CD4-positive, alpha-beta memory T cell (primary cell): ENCODE measurements at regions of chr22 and their contacts with region 1.

Region 1: GRCh38 chr22:31970490-31971444 is 26.4 kb downstream of the YWHAH start:
- DNase-seq: peak; percentile 82 to 93 (median 86)
- H3K4me3 ChIP-seq: peak overlapping the region; percentile 39 to 61
- H3K4me3 Mint-ChIP-seq: peak overlapping the region; percentile 81 to 95 (median 86)
- H3K27ac ChIP-seq: peak overlapping the region; percentile 10
- H3K27ac Mint-ChIP-seq: peak overlapping the region; percentile 73 to 94 (median 85)
- H3K4me1 ChIP-seq: peaks cover 19% of the 10 kb centered on the region
- H3K4me1 Mint-ChIP-seq: peaks cover 5 to 19% (median 13%) of the 10 kb centered on the region in 4 donors
- H3K27me3 ChIP-seq: no peaks in the 10 kb centered on the region
- H3K27me3 Mint-ChIP-seq: no peaks in the 10 kb centered on the region

Region 2: DNA sequence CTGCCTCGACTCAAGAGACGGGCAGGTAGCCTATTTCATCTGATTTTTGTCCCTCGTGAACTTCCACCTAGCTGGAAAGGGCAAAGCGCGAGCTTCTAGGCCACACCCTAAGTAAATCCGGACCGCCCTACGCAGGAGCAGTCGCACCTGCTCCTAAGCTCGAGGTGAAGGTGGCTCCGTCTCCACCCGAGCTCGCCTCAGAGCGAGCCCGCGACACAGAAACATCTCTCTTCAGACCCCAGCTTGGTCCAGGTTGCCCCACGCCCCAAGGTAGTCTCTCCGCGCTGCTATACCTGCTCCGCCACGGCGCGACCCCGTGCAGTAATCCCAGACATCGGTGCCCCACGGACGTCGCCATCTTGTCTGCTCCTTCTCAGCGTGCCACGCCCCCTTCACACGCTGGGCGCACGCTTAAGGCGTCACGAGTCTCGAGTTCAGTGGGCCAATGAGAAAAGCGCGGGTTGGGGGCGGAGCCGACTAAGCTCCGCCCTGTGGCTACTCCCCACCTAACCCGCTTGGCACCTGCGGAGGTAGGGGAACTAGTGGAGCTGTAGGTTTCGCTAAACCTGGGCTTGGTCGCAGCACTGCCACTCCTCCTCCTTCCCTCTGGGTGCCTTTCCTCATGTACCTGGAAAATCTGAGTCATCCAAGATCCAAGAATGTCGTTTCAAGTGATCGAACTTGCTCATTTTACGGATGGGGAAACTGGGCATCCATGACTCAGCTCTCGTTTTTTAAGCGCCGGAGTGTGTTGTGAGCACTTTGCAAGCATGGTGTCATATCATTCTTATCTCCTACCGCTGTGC is 308.7 kb before region 1 on chr22 and contains the start of gene PISD:
- CTCF ChIA-PET with region 1: interaction called, 46 read pairs
- POLR2A ChIA-PET with region 1: interaction called, 8 read pairs
- intact Hi-C with region 1: loop called (anchors 1 kb)
- DNase-seq: peak; percentile 96 to 97 (median 97)
- H3K4me3 ChIP-seq: peak within 1 kb of the TSS; percentile 78 to 96
- H3K4me3 Mint-ChIP-seq: peak within 1 kb of the TSS; percentile 97 to 100 (median 100)
- H3K27ac ChIP-seq: peak within 1 kb of the TSS; percentile 73
- H3K27ac Mint-ChIP-seq: peak within 1 kb of the TSS; percentile 95 to 100 (median 98)
- H3K4me1 ChIP-seq: peaks cover 21% of the 10 kb centered on the region
- H3K4me1 Mint-ChIP-seq: peaks cover 26 to 46% (median 33%) of the 10 kb centered on the region in 4 donors
- H3K27me3 ChIP-seq: no peaks in the 10 kb centered on the region
- H3K27me3 Mint-ChIP-seq: peaks cover 0 to 2% of the 10 kb centered on the region in 2 donors
- total RNA-seq, gene PISD: 34.3 to 35.4 TPM

Region 3: GRCh38 chr22:31749636-31750364 is 221.0 kb before region 1 on chr22 and contains the start of gene PRR14L:
- CTCF ChIA-PET with region 1: interaction called, 7 read pairs
- POLR2A ChIA-PET with region 1: no interaction called
- intact Hi-C with region 1: loop called (anchors 1 kb)
- DNase-seq: peak; percentile 96 to 99 (median 96)
- H3K4me3 ChIP-seq: peak within 1 kb of the TSS; percentile 24 to 87
- H3K4me3 Mint-ChIP-seq: peak within 1 kb of the TSS; percentile 92 to 100 (median 96)
- H3K27ac ChIP-seq: peak within 1 kb of the TSS; percentile 85
- H3K27ac Mint-ChIP-seq: peak within 1 kb of the TSS; percentile 93 to 97 (median 96)
- H3K4me1 ChIP-seq: peaks cover 48% of the 10 kb centered on the region
- H3K4me1 Mint-ChIP-seq: peaks cover 33 to 70% (median 50%) of the 10 kb centered on the region in 4 donors
- H3K27me3 ChIP-seq: no peaks in the 10 kb centered on the region
- H3K27me3 Mint-ChIP-seq: no peaks in the 10 kb centered on the region
- total RNA-seq, gene PRR14L: 70.7 to 72.6 TPM

Region 4: DNA sequence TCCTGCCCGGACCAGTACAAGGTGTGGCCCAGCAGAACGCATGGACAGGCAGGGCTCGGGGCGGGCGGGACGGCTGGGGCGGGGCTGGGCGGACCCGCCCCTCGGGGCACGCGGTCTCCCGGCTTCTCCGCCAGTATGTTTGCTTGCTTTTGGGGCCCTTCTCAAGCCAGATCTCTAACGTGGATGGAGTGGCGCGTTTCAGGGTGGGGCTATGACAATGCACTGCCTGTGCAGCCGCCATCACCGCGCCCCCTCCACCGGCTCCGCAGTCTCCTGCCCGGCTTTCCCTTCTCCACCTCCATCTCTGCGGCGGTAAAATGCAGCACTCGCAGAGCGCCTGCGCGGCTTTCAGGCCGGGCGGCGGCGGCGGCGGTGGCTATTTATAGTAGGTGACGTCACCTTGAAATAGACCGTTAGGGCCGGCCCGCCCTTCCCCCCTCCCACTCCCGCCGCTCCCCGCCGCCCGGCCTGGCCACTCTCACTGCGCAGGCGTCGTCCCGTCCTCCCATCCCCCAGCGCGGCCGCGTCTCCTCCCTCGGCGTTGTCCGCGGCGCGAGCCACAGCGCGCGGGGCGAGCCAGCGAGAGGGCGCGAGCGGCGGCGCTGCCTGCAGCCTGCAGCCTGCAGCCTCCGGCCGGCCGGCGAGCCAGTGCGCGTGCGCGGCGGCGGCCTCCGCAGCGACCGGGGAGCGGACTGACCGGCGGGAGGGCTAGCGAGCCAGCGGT is 26.6 kb before region 1 on chr22 and contains the start of gene YWHAH:
- CTCF ChIA-PET with region 1: interaction called, 20 read pairs
- POLR2A ChIA-PET with region 1: interaction called, 6 read pairs
- intact Hi-C with region 1: loop called (anchors 1 kb)
- DNase-seq: peak; percentile 86 to 89 (median 86)
- H3K4me3 ChIP-seq: peak within 1 kb of the TSS; percentile 55 to 67
- H3K4me3 Mint-ChIP-seq: peak within 1 kb of the TSS; percentile 91 to 97 (median 94)
- H3K27ac ChIP-seq: peak within 1 kb of the TSS; percentile 77
- H3K27ac Mint-ChIP-seq: peak within 1 kb of the TSS in 6 of 7 donors; percentile 94 to 98 (median 96)
- H3K4me1 ChIP-seq: peaks cover 33% of the 10 kb centered on the region
- H3K4me1 Mint-ChIP-seq: peaks cover 10 to 25% (median 17%) of the 10 kb centered on the region in 4 donors
- H3K27me3 ChIP-seq: no peaks in the 10 kb centered on the region
- H3K27me3 Mint-ChIP-seq: no peaks in the 10 kb centered on the region
- total RNA-seq, gene YWHAH: 48.0 to 57.0 TPM

Region 5: GRCh38 chr22:31958625-31959239 is 12.0 kb before region 1 on chr22:
- CTCF ChIA-PET with region 1: interaction called, 95 read pairs
- POLR2A ChIA-PET with region 1: interaction called, 16 read pairs
- intact Hi-C with region 1: no loop called
- DNase-seq: peak; percentile 40 to 72 (median 69)
- H3K4me3 ChIP-seq: no peak overlapping the region
- H3K4me3 Mint-ChIP-seq: peak overlapping the region; percentile 73 to 90 (median 79)
- H3K27ac ChIP-seq: peak overlapping the region; percentile 61
- H3K27ac Mint-ChIP-seq: peak overlapping the region; percentile 95 to 99 (median 97)
- H3K4me1 ChIP-seq: peaks cover 64% of the 10 kb centered on the region
- H3K4me1 Mint-ChIP-seq: peaks cover 44 to 71% (median 55%) of the 10 kb centered on the region in 4 donors
- H3K27me3 ChIP-seq: no peaks in the 10 kb centered on the region
- H3K27me3 Mint-ChIP-seq: no peaks in the 10 kb centered on the region

Region 6: GRCh38 chr22:32097018-32097417 is 126.3 kb after region 1 on chr22:
- CTCF ChIA-PET with region 1: no interaction called
- POLR2A ChIA-PET with region 1: no interaction called
- intact Hi-C with region 1: no loop called
- DNase-seq: no peak
- H3K4me3 ChIP-seq: no peak overlapping the region
- H3K4me3 Mint-ChIP-seq: no peak overlapping the region
- H3K27ac ChIP-seq: no peak overlapping the region
- H3K27ac Mint-ChIP-seq: no peak overlapping the region
- H3K4me1 ChIP-seq: no peaks in the 10 kb centered on the region
- H3K4me1 Mint-ChIP-seq: peaks cover 11 to 16% (median 14%) of the 10 kb centered on the region in 4 donors
- H3K27me3 ChIP-seq: no peaks in the 10 kb centered on the region
- H3K27me3 Mint-ChIP-seq: peaks cover 3 to 9% of the 10 kb centered on the region in 2 donors

Region 7: GRCh38 chr22:32389685-32390084 is 418.9 kb after region 1 on chr22:
- CTCF ChIA-PET with region 1: no interaction called
- POLR2A ChIA-PET with region 1: no interaction called
- intact Hi-C with region 1: loop called (anchors 10 kb)
- DNase-seq: no peak
- H3K4me3 ChIP-seq: no peak overlapping the region
- H3K4me3 Mint-ChIP-seq: no peak overlapping the region
- H3K27ac ChIP-seq: no peak overlapping the region
- H3K27ac Mint-ChIP-seq: peak overlapping the region in 3 of 7 donors; percentile 32 to 54 (median 40)
- H3K4me1 ChIP-seq: no peaks in the 10 kb centered on the region
- H3K4me1 Mint-ChIP-seq: peaks cover 0 to 1% (median 0%) of the 10 kb centered on the region in 4 donors
- H3K27me3 ChIP-seq: no peaks in the 10 kb centered on the region
- H3K27me3 Mint-ChIP-seq: no peaks in the 10 kb centered on the region

Region 8: DNA sequence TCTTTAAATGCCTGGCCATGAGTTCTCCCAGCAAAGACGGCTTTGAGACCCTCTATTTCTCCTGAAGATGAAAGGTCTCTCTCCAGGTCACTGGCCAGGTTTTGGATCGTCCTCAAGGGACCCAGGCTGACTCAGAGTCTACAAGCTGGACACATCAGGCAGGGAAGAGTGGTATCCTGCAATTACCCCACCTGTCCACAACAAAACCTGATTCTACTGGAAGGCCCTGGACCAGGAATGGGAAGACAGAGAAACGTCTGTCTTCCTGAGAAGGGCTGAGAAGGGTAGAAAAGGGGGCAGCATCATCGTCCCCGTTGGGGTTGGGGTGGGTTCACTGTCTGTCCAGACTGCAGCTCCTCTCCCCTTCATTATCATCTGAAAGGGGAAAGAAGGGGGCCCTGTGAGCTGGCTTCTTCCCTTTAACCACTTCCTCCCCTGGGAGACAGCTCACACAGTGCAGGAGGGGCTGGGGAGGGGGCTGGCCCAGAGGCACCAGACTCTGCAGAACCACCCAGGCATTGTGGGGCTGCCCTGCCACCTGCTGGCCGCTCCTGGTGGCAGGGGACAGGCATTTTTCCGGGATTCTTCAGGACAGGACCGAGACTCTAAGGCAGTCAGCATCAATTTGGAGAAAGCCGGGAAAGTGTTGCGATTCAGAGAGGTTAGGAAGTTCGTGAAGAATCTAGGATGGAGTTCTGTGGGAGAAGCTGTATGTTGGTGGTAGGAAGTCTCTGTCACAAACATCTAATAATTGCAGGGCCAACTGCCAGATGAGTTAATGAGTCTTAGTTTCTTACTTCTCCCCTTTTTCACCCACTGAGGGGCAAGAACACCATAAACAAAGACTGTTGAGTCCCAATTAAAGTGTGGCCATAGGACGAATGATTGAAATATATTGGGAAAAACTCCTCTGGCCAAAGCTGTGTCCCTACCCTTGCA is 1029.8 kb after region 1 on chr22:
- CTCF ChIA-PET with region 1: no interaction called
- POLR2A ChIA-PET with region 1: no interaction called
- intact Hi-C with region 1: loop called (anchors 10 kb)
- DNase-seq: peak in 4 of 5 donors; percentile 4 to 12 (median 9)
- H3K4me3 ChIP-seq: no peak overlapping the region
- H3K4me3 Mint-ChIP-seq: no peak overlapping the region
- H3K27ac ChIP-seq: no peak overlapping the region
- H3K27ac Mint-ChIP-seq: no peak overlapping the region
- H3K4me1 ChIP-seq: no peaks in the 10 kb centered on the region
- H3K4me1 Mint-ChIP-seq: peaks cover 0 to 2% (median 0%) of the 10 kb centered on the region in 4 donors
- H3K27me3 ChIP-seq: no peaks in the 10 kb centered on the region
- H3K27me3 Mint-ChIP-seq: peaks cover 2% of the 10 kb centered on the region in 2 donors